ENCODE measurements at regions of chr3 and their contacts with region 1.

Region 1: DNA sequence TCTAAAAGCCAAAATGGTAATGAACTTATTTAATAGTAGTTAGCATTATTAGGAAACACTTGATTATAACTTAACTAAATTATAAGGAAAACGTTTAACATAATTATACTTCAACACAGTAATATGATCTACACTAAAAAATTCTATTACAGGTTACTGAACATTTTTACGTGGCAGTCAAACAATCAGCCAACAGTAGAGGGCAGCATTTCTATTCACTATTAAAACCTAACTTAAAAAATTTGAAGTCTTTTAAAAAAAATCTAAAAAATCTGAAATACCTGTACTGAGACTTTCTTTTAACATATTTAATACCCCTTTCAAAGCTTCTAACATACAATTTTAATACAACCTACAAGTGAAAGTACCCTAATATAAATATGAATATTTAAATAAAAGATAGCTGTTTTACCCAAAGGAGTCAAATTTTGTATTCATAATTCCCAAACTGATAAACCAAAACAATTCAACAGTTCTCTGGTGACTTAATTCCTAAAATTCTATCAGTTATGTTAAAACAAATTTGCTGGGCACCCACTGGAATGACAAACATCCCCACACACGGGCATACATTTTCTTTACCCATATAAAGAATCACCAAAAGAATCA is 41.5 kb downstream of the DLG1 start:
- DNase-seq: peak; percentile 60
- ATAC-seq: no peak
- H3K4me3 ChIP-seq: no peak overlapping the region
- H3K4me3 Mint-ChIP-seq: no peak overlapping the region
- H3K27ac ChIP-seq: no peak overlapping the region
- H3K27ac Mint-ChIP-seq: no peak overlapping the region
- H3K4me1 ChIP-seq: no peaks in the 10 kb centered on the region
- H3K4me1 Mint-ChIP-seq: peaks cover 22% of the 10 kb centered on the region
- H3K27me3 ChIP-seq: no peaks in the 10 kb centered on the region
- H3K27me3 Mint-ChIP-seq: no peaks in the 10 kb centered on the region
- CTCF ChIP-seq: peak; percentile 85

Region 2: DNA sequence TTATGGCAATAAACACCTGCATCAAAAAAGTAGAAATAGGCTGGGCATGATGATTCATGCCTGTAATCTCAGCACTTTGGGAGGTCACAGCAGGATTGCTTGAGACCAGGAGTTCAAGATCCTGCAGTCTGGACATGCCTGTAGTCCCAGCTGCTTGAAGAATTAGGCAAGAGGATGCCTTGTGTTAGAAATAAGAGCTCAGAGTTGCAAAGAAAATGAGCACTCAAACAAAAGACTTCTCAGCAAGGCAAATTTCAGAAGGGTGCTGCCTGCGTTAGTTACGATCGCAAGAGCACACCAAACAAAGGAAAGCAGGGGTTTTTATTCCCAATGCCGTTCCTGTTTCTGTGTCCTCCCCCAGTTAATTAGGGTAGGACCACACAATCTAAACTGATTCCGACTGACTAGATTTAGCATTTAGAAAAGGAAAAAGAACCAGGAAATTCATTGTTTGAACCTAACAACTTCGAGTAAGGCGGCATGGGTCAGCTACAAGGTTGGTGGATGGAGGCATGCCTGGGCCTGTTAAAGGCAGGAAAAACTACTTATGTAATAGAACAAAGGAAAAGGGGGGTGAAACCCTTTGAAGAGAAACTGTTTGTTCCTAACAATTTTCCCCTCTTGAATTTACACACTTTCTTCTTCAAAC is 14.0 kb before region 1 on chr3:
- CTCF ChIA-PET with region 1: interaction called, 12 read pairs
- POLR2A ChIA-PET with region 1: interaction called, 3 read pairs
- intact Hi-C with region 1: no loop called
- DNase-seq: no peak
- ATAC-seq: no peak
- H3K4me3 ChIP-seq: no peak overlapping the region
- H3K4me3 Mint-ChIP-seq: no peak overlapping the region
- H3K27ac ChIP-seq: no peak overlapping the region
- H3K27ac Mint-ChIP-seq: no peak overlapping the region
- H3K4me1 ChIP-seq: peaks cover 0 to 6% of the 10 kb centered on the region in 2 donors
- H3K4me1 Mint-ChIP-seq: peaks cover 25% of the 10 kb centered on the region
- H3K27me3 ChIP-seq: no peaks in the 10 kb centered on the region
- H3K27me3 Mint-ChIP-seq: no peaks in the 10 kb centered on the region
- CTCF ChIP-seq: no peak

Region 3: GRCh38 chr3:197268294-197268693 is 11.4 kb after region 1 on chr3:
- CTCF ChIA-PET with region 1: interaction called, 17 read pairs
- POLR2A ChIA-PET with region 1: no interaction called
- intact Hi-C with region 1: no loop called
- DNase-seq: no peak
- ATAC-seq: no peak
- H3K4me3 ChIP-seq: no peak overlapping the region
- H3K4me3 Mint-ChIP-seq: no peak overlapping the region
- H3K27ac ChIP-seq: no peak overlapping the region
- H3K27ac Mint-ChIP-seq: no peak overlapping the region
- H3K4me1 ChIP-seq: no peaks in the 10 kb centered on the region
- H3K4me1 Mint-ChIP-seq: peaks cover 13% of the 10 kb centered on the region
- H3K27me3 ChIP-seq: no peaks in the 10 kb centered on the region
- H3K27me3 Mint-ChIP-seq: no peaks in the 10 kb centered on the region
- CTCF ChIP-seq: no peak

Region 4: DNA sequence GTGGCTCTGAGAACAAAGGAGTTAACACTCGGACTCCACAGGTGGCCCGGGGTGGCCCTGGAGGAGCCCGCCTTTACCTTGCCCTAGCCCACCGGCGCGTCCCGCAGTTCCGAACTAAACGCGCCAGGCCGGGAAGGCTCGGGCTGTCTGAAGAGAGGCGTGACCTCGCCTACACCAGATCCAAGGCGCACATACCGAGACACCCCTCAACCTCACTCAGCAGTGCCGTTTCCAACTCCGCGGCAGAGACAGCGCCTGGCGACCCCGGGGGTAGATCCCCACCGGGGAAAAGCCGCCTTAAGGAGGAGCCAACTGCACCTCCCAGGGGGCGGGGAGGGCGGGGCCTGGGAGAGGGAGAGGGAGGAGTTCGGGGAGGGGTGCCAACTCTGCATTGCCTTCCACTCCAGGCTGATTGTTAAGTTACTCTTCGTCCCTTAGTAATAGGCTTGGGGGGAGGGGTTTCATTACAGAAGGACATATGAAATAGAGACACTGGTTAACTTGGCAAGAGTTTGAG is 41.5 kb after region 1 on chr3 and contains the start of gene DLG1:
- CTCF ChIA-PET with region 1: interaction called, 16 read pairs
- POLR2A ChIA-PET with region 1: no interaction called
- intact Hi-C with region 1: loop called (anchors 5 kb)
- DNase-seq: peak; percentile 86
- ATAC-seq: peak; percentile 67
- H3K4me3 ChIP-seq: peak within 1 kb of the TSS; percentile 82 to 97 (median 95)
- H3K4me3 Mint-ChIP-seq: peak within 1 kb of the TSS; percentile 97
- H3K27ac ChIP-seq: peak within 1 kb of the TSS; percentile 69 to 79
- H3K27ac Mint-ChIP-seq: peak within 1 kb of the TSS; percentile 95
- H3K4me1 ChIP-seq: peaks cover 15 to 21% of the 10 kb centered on the region in 2 donors
- H3K4me1 Mint-ChIP-seq: peaks cover 26% of the 10 kb centered on the region
- H3K27me3 ChIP-seq: peaks cover 0 to 19% (median 11%) of the 10 kb centered on the region in 4 experiments
- H3K27me3 Mint-ChIP-seq: peaks cover 26% of the 10 kb centered on the region
- CTCF ChIP-seq: no peak
- total RNA-seq, gene DLG1: 114 and 117 TPM in 2 replicates

Region 5: GRCh38 chr3:197438906-197439305 is 182.0 kb after region 1 on chr3:
- CTCF ChIA-PET with region 1: no interaction called
- POLR2A ChIA-PET with region 1: no interaction called
- intact Hi-C with region 1: no loop called
- DNase-seq: no peak
- ATAC-seq: no peak
- H3K4me3 ChIP-seq: no peak overlapping the region
- H3K4me3 Mint-ChIP-seq: no peak overlapping the region
- H3K27ac ChIP-seq: no peak overlapping the region
- H3K27ac Mint-ChIP-seq: no peak overlapping the region
- H3K4me1 ChIP-seq: no peaks in the 10 kb centered on the region
- H3K4me1 Mint-ChIP-seq: no peaks in the 10 kb centered on the region
- H3K27me3 ChIP-seq: peaks cover 0 to 16% (median 0%) of the 10 kb centered on the region in 4 experiments
- H3K27me3 Mint-ChIP-seq: peaks cover 49% of the 10 kb centered on the region
- CTCF ChIP-seq: no peak

Region 6: DNA sequence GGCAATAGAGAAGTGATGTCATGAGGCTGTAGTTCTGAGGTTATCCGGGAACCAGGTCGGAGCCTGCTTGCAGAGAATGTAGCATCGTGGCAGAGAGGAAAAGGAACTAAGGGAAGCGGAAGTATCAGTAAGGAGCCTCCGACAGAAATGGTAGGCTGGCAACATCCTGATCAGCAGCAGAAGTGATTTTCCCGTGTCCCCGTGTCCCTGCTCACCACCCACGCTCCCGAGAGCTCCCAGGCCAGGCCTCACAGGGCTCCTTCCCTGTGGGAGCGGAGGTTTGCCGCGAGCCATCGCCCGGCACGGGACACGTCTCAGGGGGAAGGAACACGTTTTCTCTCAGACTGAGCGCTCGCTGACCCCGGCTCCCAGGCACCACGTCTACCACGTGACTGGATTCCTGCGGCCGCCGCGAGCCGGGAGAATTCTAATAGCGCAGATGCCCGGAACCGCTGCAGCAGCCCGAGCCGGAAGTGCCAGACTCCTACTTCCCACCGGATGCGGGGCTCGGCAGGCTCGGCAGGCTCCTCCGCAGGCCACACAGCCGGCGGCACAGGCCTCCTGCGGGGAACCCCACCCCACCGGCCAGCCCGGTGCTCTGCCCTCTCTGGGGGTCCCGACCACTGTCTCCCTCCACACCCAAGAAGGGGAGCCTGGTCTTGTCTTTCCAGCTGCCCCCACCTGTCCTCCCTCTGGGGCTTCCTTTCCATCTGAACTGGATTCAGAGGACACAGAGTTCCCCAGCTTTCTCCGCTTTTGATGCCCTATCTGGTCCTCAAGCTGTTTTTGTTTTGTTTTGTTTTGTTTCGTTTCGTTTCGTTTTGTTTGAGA is 199.5 kb after region 1 on chr3:
- CTCF ChIA-PET with region 1: interaction called, 22 read pairs
- POLR2A ChIA-PET with region 1: interaction called, 3 read pairs
- intact Hi-C with region 1: loop called (anchors 2 kb)
- DNase-seq: peak; percentile 60
- ATAC-seq: peak; percentile 47
- H3K4me3 ChIP-seq: peak overlapping the region; percentile 68 to 93 (median 84)
- H3K4me3 Mint-ChIP-seq: peak overlapping the region; percentile 88
- H3K27ac ChIP-seq: peak overlapping the region; percentile 27 to 70
- H3K27ac Mint-ChIP-seq: peak overlapping the region; percentile 83
- H3K4me1 ChIP-seq: peaks cover 10 to 19% of the 10 kb centered on the region in 2 donors
- H3K4me1 Mint-ChIP-seq: peaks cover 14% of the 10 kb centered on the region
- H3K27me3 ChIP-seq: peaks cover 0 to 6% (median 0%) of the 10 kb centered on the region in 4 experiments
- H3K27me3 Mint-ChIP-seq: no peaks in the 10 kb centered on the region
- CTCF ChIP-seq: no peak

Region 7: GRCh38 chr3:197511130-197511529 is 254.2 kb after region 1 on chr3:
- CTCF ChIA-PET with region 1: interaction called, 49 read pairs
- POLR2A ChIA-PET with region 1: no interaction called
- intact Hi-C with region 1: loop called (anchors 1 kb)
- DNase-seq: no peak
- ATAC-seq: no peak
- H3K4me3 ChIP-seq: no peak overlapping the region
- H3K4me3 Mint-ChIP-seq: no peak overlapping the region
- H3K27ac ChIP-seq: no peak overlapping the region
- H3K27ac Mint-ChIP-seq: no peak overlapping the region
- H3K4me1 ChIP-seq: peaks cover 4 to 8% of the 10 kb centered on the region in 2 donors
- H3K4me1 Mint-ChIP-seq: peaks cover 4% of the 10 kb centered on the region
- H3K27me3 ChIP-seq: peaks cover 0 to 6% (median 3%) of the 10 kb centered on the region in 4 experiments
- H3K27me3 Mint-ChIP-seq: no peaks in the 10 kb centered on the region
- CTCF ChIP-seq: no peak

Region 8: DNA sequence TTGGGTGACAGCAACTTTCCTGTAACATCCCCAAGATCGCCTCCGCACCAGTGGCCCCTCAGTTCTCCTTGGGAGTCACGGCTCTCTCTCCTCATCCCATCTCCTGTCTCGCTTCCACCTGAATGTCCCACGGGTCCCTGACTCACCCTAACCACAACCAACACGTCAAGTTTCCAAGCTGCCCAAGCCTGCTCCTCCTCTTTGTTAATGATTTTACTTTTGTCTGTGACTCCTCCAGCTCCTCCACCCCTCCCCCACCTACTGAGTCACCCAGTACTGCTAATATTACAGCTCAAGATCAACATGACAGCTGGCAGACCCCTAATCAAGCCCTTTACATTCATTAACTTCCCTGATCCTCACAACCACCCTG is 259.6 kb after region 1 on chr3:
- CTCF ChIA-PET with region 1: interaction called, 49 read pairs
- POLR2A ChIA-PET with region 1: no interaction called
- intact Hi-C with region 1: no loop called
- DNase-seq: no peak
- ATAC-seq: peak; percentile 48
- H3K4me3 ChIP-seq: no peak overlapping the region
- H3K4me3 Mint-ChIP-seq: no peak overlapping the region
- H3K27ac ChIP-seq: peak overlapping the region; percentile 41 to 56
- H3K27ac Mint-ChIP-seq: peak overlapping the region; percentile 60
- H3K4me1 ChIP-seq: peaks cover 7 to 11% of the 10 kb centered on the region in 2 donors
- H3K4me1 Mint-ChIP-seq: peaks cover 10% of the 10 kb centered on the region
- H3K27me3 ChIP-seq: no peaks in the 10 kb centered on the region
- H3K27me3 Mint-ChIP-seq: no peaks in the 10 kb centered on the region
- CTCF ChIP-seq: no peak

Region 9: GRCh38 chr3:198017100-198017499 is 760.2 kb after region 1 on chr3:
- CTCF ChIA-PET with region 1: no interaction called
- POLR2A ChIA-PET with region 1: no interaction called
- intact Hi-C with region 1: no loop called
- DNase-seq: no peak
- ATAC-seq: no peak
- H3K4me3 ChIP-seq: no peak overlapping the region
- H3K4me3 Mint-ChIP-seq: no peak overlapping the region
- H3K27ac ChIP-seq: no peak overlapping the region
- H3K27ac Mint-ChIP-seq: no peak overlapping the region
- H3K4me1 ChIP-seq: no peaks in the 10 kb centered on the region
- H3K4me1 Mint-ChIP-seq: no peaks in the 10 kb centered on the region
- H3K27me3 ChIP-seq: no peaks in the 10 kb centered on the region
- H3K27me3 Mint-ChIP-seq: no peaks in the 10 kb centered on the region
- CTCF ChIP-seq: no peak